ENCODE measurements at regions of chr17 and their contacts with region 1.

Region 1: DNA sequence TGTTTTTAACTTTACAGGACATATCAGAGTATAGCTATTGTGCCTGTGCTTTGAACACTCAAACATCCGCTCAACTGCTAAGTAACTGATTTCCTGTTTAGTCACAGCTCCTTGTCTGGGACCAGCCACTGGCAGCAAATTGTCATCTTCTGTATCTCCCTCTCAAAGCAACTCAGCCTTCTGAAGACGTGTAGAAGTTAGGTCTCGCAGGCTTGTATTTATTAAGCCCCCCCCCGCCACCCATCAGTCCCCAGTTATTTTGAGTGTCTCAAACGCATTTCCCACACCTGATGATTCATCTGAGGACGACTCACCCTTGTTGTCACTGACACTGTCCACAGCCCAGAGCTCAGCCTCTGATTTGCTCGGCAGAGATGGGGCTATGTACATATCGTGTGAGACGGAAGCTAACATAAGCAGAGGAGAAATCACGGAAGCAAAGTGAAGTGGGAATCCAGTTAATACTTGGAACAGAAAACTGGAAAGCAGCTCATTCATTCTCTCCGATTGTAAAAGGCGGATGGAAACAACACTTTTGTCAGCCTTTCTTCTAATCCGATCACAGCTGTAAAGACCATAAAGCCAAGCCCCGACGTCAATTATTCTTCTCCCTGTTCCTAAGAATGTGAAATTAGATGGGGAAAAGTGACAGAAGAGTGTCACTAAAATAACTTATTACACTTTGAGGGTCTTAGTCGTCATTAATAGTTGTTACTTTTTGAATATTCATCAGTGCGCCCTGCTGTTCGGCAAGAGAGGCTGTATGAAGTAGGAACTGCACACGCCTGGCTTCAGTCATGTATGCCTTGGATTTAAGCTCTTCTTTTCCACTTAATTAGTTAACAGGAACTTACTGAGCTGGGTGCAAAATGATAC is 64.2 kb downstream of the PITPNC1 start:
- DNase-seq: peak; percentile 80 to 97 (median 86)
- H3K4me3 ChIP-seq: peak overlapping the region; percentile 4 to 48
- H3K4me3 Mint-ChIP-seq: peak overlapping the region; percentile 79 to 90 (median 86)
- H3K27ac ChIP-seq: peak overlapping the region; percentile 77
- H3K27ac Mint-ChIP-seq: peak overlapping the region; percentile 87 to 99 (median 98)
- H3K4me1 ChIP-seq: peaks cover 91% of the 10 kb centered on the region
- H3K4me1 Mint-ChIP-seq: peaks cover 48 to 92% (median 72%) of the 10 kb centered on the region in 4 donors
- H3K27me3 ChIP-seq: no peaks in the 10 kb centered on the region
- H3K27me3 Mint-ChIP-seq: no peaks in the 10 kb centered on the region

Region 2: DNA sequence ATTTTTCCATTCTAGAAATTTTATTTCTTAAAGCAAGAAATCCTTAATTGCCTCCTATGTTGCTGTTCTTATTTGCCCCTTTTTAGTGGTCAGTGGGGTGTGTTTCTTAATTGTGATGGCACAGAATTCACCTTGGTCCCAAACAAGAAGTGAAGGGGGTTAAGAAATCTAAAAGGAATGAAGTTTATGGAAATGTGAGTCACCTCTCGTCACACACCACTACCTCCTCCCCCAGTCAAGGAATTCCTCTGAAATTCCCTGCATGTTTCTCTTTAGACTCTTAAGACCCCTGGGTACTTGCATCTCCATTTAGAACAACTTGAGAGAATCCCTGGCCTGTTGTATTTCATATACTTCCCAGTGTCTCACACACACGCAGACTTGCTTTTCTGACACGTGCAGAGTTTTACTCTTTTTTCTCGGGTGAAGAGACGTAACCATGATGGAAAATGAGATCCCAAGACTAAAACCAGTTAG is 891.5 kb before region 1 on chr17:
- CTCF ChIA-PET with region 1: no interaction called
- POLR2A ChIA-PET with region 1: no interaction called
- intact Hi-C with region 1: no loop called
- DNase-seq: no peak
- H3K4me3 ChIP-seq: no peak overlapping the region
- H3K4me3 Mint-ChIP-seq: no peak overlapping the region
- H3K27ac ChIP-seq: no peak overlapping the region
- H3K27ac Mint-ChIP-seq: peak overlapping the region in 3 of 7 donors; percentile 22 to 51 (median 37)
- H3K4me1 ChIP-seq: peaks cover 33% of the 10 kb centered on the region
- H3K4me1 Mint-ChIP-seq: peaks cover 31 to 58% (median 43%) of the 10 kb centered on the region in 4 donors
- H3K27me3 ChIP-seq: no peaks in the 10 kb centered on the region
- H3K27me3 Mint-ChIP-seq: no peaks in the 10 kb centered on the region

Region 3: DNA sequence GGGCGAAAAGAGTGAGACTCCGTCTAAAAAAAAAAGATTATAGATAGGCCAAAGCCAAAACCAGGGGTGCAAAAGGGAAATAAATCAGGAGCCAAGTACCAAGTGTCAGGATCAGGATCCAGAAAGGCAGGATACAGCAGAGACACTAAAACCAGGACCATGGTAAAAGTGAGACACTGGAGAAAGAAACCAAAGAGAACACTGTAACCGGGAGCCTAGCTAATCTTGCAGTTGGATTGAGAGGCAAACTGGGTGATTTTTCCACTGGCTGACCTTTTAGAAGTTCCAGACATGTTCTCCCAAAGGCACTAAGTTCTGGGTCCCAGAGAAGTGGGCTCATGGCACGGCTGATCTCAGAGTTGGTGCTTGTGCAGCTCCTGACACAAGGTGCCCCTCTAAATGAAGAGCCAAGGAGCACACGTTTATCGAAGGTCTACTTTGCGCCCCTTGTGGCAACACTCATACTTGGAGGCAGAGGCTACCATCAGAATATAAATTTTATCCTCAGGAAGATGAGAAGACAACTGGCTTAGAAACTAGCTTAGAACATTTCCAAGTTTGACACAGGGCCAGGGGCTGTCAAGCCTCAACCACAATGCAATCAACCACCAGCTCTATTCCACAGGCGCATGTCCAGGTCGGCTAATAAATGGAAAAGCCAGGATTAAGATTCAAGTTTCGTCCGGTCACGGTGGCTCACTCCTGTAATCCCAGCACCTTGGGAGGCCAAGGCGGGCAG is 168.8 kb before region 1 on chr17:
- CTCF ChIA-PET with region 1: no interaction called
- POLR2A ChIA-PET with region 1: no interaction called
- intact Hi-C with region 1: no loop called
- DNase-seq: no peak
- H3K4me3 ChIP-seq: no peak overlapping the region
- H3K4me3 Mint-ChIP-seq: no peak overlapping the region
- H3K27ac ChIP-seq: no peak overlapping the region
- H3K27ac Mint-ChIP-seq: peak overlapping the region in 1 of 7 donors; percentile 37
- H3K4me1 ChIP-seq: no peaks in the 10 kb centered on the region
- H3K4me1 Mint-ChIP-seq: peaks cover 0 to 5% (median 1%) of the 10 kb centered on the region in 4 donors
- H3K27me3 ChIP-seq: no peaks in the 10 kb centered on the region
- H3K27me3 Mint-ChIP-seq: no peaks in the 10 kb centered on the region

Region 4: GRCh38 chr17:67390646-67391384 is 50.5 kb before region 1 on chr17:
- CTCF ChIA-PET with region 1: interaction called, 38 read pairs
- POLR2A ChIA-PET with region 1: interaction called, 161 read pairs
- intact Hi-C with region 1: loop called (anchors 1 kb)
- DNase-seq: peak; percentile 47 to 82 (median 61)
- H3K4me3 ChIP-seq: peak overlapping the region in 1 of 2 donors; percentile 6
- H3K4me3 Mint-ChIP-seq: peak overlapping the region; percentile 69 to 96 (median 85)
- H3K27ac ChIP-seq: peak overlapping the region; percentile 53
- H3K27ac Mint-ChIP-seq: peak overlapping the region; percentile 92 to 97 (median 96)
- H3K4me1 ChIP-seq: peaks cover 76% of the 10 kb centered on the region
- H3K4me1 Mint-ChIP-seq: peaks cover 46 to 82% (median 64%) of the 10 kb centered on the region in 4 donors
- H3K27me3 ChIP-seq: no peaks in the 10 kb centered on the region
- H3K27me3 Mint-ChIP-seq: no peaks in the 10 kb centered on the region

Region 5: GRCh38 chr17:67421869-67422273 is 19.4 kb before region 1 on chr17:
- CTCF ChIA-PET with region 1: interaction called, 47 read pairs
- POLR2A ChIA-PET with region 1: interaction called, 240 read pairs
- intact Hi-C with region 1: loop called (anchors 1 kb)
- DNase-seq: peak; percentile 78 to 89 (median 83)
- H3K4me3 ChIP-seq: peak overlapping the region in 1 of 2 donors; percentile 15
- H3K4me3 Mint-ChIP-seq: peak overlapping the region in 7 of 8 donors; percentile 19 to 80 (median 64)
- H3K27ac ChIP-seq: peak overlapping the region; percentile 77
- H3K27ac Mint-ChIP-seq: peak overlapping the region; percentile 85 to 98 (median 97)
- H3K4me1 ChIP-seq: peaks cover 65% of the 10 kb centered on the region
- H3K4me1 Mint-ChIP-seq: peaks cover 47 to 92% (median 72%) of the 10 kb centered on the region in 4 donors
- H3K27me3 ChIP-seq: no peaks in the 10 kb centered on the region
- H3K27me3 Mint-ChIP-seq: no peaks in the 10 kb centered on the region

Region 6: GRCh38 chr17:67459870-67460455 is 18.7 kb after region 1 on chr17:
- CTCF ChIA-PET with region 1: interaction called, 44 read pairs
- POLR2A ChIA-PET with region 1: interaction called, 274 read pairs
- intact Hi-C with region 1: no loop called
- DNase-seq: no peak
- H3K4me3 ChIP-seq: no peak overlapping the region
- H3K4me3 Mint-ChIP-seq: no peak overlapping the region
- H3K27ac ChIP-seq: no peak overlapping the region
- H3K27ac Mint-ChIP-seq: peak overlapping the region in 4 of 7 donors; percentile 12 to 76 (median 65)
- H3K4me1 ChIP-seq: peaks cover 56% of the 10 kb centered on the region
- H3K4me1 Mint-ChIP-seq: peaks cover 43 to 90% (median 69%) of the 10 kb centered on the region in 4 donors
- H3K27me3 ChIP-seq: no peaks in the 10 kb centered on the region
- H3K27me3 Mint-ChIP-seq: no peaks in the 10 kb centered on the region

Region 7: GRCh38 chr17:67481808-67482207 is 40.5 kb after region 1 on chr17:
- CTCF ChIA-PET with region 1: interaction called, 198 read pairs
- POLR2A ChIA-PET with region 1: interaction called, 170 read pairs
- intact Hi-C with region 1: no loop called
- DNase-seq: no peak
- H3K4me3 ChIP-seq: no peak overlapping the region
- H3K4me3 Mint-ChIP-seq: peak overlapping the region in 1 of 8 donors; percentile 7
- H3K27ac ChIP-seq: no peak overlapping the region
- H3K27ac Mint-ChIP-seq: peak overlapping the region in 5 of 7 donors; percentile 19 to 66 (median 41)
- H3K4me1 ChIP-seq: peaks cover 43% of the 10 kb centered on the region
- H3K4me1 Mint-ChIP-seq: peaks cover 46 to 80% (median 61%) of the 10 kb centered on the region in 4 donors
- H3K27me3 ChIP-seq: no peaks in the 10 kb centered on the region
- H3K27me3 Mint-ChIP-seq: no peaks in the 10 kb centered on the region

Measured in CD4-positive, alpha-beta memory T cell (primary cell).